GM18951 (cell line): ENCODE measurements at regions of chr6 and their contacts with region 1.

Region 1: GRCh38 chr6:1596088-1596852 is 13.4 kb upstream of the FOXC1 start:
- POLR2A ChIP-seq: no peak

Region 2: GRCh38 chr6:1047981-1048541 is 548.2 kb before region 1 on chr6:
- in situ Hi-C with region 1: no loop called
- POLR2A ChIP-seq: no peak

Region 3: GRCh38 chr6:2344319-2344905 is 748.1 kb after region 1 on chr6:
- in situ Hi-C with region 1: loop called (anchors 25 kb)
- POLR2A ChIP-seq: no peak

Region 4: DNA sequence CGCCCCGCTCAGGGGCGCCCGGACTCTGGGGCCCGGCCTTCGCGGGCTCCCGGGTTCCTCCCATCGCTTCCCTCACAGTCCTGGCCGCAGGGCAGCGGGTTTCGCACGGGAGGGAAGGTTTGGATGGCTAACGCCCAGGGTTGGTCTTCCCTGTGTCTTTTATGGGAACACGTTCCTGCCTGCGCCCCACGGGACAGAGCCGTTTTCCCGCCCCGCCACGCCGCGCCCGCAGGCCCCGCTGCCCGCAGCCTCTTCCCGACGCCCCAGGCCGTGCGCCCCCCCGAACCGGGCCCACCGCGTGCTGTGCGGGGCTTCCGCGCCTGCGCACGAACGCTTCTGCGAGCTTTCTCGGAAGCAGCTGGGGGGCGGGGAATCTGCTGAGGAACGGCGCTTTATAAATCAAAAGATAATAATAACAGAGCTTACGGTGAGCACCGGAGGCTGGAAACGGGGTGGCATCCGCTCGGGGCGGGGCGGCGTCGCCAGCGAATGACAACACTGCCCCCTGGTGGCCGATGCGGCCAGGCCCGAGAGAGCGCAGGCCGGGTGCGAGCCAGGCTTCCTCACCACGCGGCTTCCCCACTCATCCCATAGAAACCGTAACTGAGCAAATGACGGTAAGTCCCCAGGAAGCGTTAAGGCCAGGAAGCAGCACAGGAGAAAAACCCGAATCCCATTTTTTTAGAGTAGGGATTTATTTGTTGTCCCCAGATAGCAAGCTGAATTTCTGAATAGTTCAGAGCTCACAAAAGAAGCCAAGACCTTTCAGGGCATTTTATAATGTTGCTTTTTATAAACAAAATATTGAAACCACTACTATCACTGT is 1038.1 kb after region 1 on chr6:
- in situ Hi-C with region 1: loop called (anchors 25 kb)
- POLR2A ChIP-seq: no peak